ENCODE measurements at regions of chr11 and their contacts with region 1.

Region 1: DNA sequence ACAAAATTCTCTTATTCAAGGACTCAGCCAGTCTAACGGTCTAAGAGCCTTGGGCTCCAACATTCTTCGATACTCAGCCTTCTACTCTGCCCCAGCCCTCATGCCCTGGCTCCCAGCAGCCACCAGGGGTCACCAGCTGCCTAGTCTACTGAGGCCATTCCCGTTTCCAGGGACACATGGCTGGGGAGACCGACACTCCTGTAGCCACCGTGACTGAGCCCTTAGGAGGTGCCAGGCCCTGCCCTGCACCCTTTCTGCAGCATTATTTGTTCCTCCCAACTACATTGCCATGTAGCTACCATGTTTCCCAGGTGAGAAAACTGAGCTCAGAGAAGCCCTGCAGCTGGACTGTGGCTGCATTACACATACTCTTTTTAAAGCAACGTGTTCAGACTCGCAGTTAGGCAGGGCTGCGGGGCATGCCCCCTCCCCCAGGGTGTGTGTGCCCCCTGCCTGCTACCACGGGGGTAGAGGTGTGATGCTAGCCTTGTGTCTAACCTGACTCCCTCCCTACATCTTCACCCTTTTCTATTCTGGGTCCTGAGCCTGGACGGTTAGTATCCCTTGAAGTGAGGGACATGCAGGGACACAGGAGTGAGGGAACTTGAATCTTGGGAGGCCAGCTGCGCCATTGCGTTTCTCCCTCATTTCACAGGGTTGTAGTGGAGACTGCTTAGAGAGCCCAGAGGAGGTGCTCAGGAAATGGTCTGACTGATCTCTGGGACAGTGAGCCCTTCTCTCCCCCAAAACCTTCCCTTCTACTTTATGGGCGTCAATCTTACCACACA is 17.5 kb downstream of the ATG16L2 start:
- DNase-seq: peak; percentile 58 to 90
- H3K4me3 ChIP-seq: no peak overlapping the region
- H3K27ac ChIP-seq: no peak overlapping the region
- H3K4me1 ChIP-seq: peaks cover 0 to 5% (median 4%) of the 10 kb centered on the region in 4 experiments; a peak in 6 of 7 replicates
- H3K27me3 ChIP-seq: no peaks in the 10 kb centered on the region; a peak in 1 of 7 replicates
- CTCF ChIP-seq: peak; percentile 94 to 99 (median 96)
- EP300 ChIP-seq: no peak
- POLR2A ChIP-seq: no peak
- RAD21 ChIP-seq: peak; percentile 99

Region 2: GRCh38 chr11:72652873-72653630 is 178.7 kb before region 1 on chr11:
- CTCF ChIA-PET with region 1: no interaction called
- POLR2A ChIA-PET with region 1: no interaction called
- DNase-seq: peak; percentile 21 to 77
- H3K4me3 ChIP-seq: no peak overlapping the region
- H3K27ac ChIP-seq: no peak overlapping the region
- H3K4me1 ChIP-seq: peaks cover 0 to 12% (median 7%) of the 10 kb centered on the region in 4 experiments; a peak in 4 of 7 replicates
- H3K27me3 ChIP-seq: no peaks in the 10 kb centered on the region; a peak in 1 of 7 replicates
- CTCF ChIP-seq: no peak
- EP300 ChIP-seq: no peak
- POLR2A ChIP-seq: no peak
- RAD21 ChIP-seq: no peak

Region 3: DNA sequence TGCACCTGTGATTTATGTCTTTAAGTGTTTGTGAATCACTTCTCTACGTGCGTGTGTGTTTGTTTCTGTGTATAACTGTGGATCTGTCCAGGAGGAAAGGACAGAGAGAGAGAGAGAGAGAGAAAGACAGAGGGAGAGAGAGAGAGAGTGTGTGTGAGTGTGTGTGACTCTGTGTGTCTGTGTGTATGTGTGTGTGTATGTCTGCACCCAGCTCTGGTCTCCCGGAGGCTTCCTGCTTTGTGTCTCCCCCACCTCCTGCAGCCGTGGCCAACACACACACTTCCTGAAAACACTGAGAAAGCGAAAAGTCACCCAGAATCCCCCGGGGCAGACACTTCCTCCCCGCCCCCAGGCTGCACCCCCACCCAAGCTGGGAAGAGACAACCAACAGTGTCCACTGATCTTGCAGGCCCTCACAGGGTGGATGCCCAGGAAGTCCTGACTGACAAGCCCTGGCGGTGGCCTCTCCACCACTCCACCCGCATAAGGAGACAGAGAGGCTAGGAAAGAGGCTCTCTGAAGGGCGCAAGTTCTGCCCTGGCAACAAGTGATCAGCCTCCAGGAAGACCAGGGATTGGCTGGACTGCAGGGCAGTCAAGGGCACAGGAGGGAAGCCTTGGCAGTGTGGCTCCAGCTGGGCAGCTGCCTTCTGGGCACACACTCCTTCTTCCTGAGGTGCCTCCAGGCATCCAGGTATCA is 109.5 kb before region 1 on chr11:
- CTCF ChIA-PET with region 1: interaction called, 17 read pairs
- POLR2A ChIA-PET with region 1: no interaction called
- DNase-seq: peak in 1 of 2 experiments; percentile 86
- H3K4me3 ChIP-seq: no peak overlapping the region
- H3K27ac ChIP-seq: 0 out of 2 replicates have a peak overlapping the region, but pooled peaks have one; percentile 66
- H3K4me1 ChIP-seq: peaks cover 0 to 9% (median 5%) of the 10 kb centered on the region in 4 experiments; a peak in 3 of 7 replicates
- H3K27me3 ChIP-seq: no peaks in the 10 kb centered on the region
- CTCF ChIP-seq: no peak
- EP300 ChIP-seq: no peak
- POLR2A ChIP-seq: no peak
- RAD21 ChIP-seq: no peak

Region 4: GRCh38 chr11:72781313-72782050 is 50.2 kb before region 1 on chr11:
- CTCF ChIA-PET with region 1: no interaction called
- POLR2A ChIA-PET with region 1: no interaction called
- DNase-seq: peak in 1 of 2 experiments; percentile 63
- H3K4me3 ChIP-seq: peak overlapping the region; percentile 42 to 76 (median 57)
- H3K27ac ChIP-seq: no peak overlapping the region
- H3K4me1 ChIP-seq: peaks cover 5 to 19% (median 13%) of the 10 kb centered on the region in 4 experiments
- H3K27me3 ChIP-seq: peaks cover 0 to 12% (median 6%) of the 10 kb centered on the region in 4 experiments; a peak in 3 of 7 replicates
- CTCF ChIP-seq: no peak
- EP300 ChIP-seq: no peak
- POLR2A ChIP-seq: no peak
- RAD21 ChIP-seq: no peak

Region 5: DNA sequence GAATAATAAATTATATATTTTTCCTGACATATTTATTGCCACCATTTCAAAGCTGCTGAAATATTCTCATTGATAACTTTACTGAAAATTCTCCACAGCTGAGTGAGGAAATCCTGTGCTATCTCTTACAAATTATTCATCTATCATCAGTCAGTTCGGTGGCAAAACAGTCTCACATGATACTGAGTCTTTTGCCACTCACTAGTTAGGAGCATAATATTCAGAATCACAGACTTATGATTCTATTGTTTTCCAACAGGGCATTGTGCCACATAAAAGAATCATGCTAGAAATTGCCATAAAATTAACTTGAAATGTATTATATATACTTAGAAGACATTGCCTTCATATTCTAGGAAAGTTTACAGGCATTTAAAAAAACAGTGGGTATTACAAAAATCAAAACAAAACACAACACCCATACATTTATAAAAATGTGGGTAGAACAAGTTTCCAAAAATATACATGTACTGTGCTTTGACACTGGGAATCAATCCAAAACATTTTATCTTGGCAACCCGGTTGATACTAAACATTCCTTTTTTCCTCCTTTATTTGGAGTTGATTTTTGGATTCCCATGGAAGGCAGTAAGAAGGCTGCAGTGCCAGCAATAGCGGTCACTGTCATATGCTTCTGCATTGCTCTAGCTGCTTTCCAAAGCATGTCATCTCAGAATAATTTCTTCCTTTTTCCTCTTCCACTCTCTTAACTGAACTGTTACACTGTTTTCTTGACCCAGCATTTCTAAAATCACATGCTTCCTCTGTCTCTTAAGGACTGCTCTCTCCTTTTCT is 25.0 kb after region 1 on chr11:
- CTCF ChIA-PET with region 1: interaction called, 11 read pairs
- POLR2A ChIA-PET with region 1: no interaction called
- DNase-seq: no peak
- H3K4me3 ChIP-seq: no peak overlapping the region
- H3K27ac ChIP-seq: no peak overlapping the region
- H3K4me1 ChIP-seq: no peaks in the 10 kb centered on the region
- H3K27me3 ChIP-seq: no peaks in the 10 kb centered on the region
- CTCF ChIP-seq: no peak
- EP300 ChIP-seq: no peak
- POLR2A ChIP-seq: no peak
- RAD21 ChIP-seq: no peak

Region 6: GRCh38 chr11:73141848-73142286 is 310.2 kb after region 1 on chr11:
- CTCF ChIA-PET with region 1: interaction called, 19 read pairs
- POLR2A ChIA-PET with region 1: no interaction called
- DNase-seq: peak in 1 of 2 experiments; percentile 84
- H3K4me3 ChIP-seq: peak overlapping the region; percentile 69 to 80 (median 78)
- H3K27ac ChIP-seq: peak overlapping the region; percentile 90; the same call in 1 of the 2 replicates
- H3K4me1 ChIP-seq: peaks cover 2 to 10% (median 8%) of the 10 kb centered on the region in 4 experiments; a peak in 6 of 7 replicates
- H3K27me3 ChIP-seq: peaks cover 0 to 12% (median 6%) of the 10 kb centered on the region in 4 experiments; a peak in 3 of 7 replicates
- CTCF ChIP-seq: no peak
- EP300 ChIP-seq: no peak
- POLR2A ChIP-seq: no peak
- RAD21 ChIP-seq: no peak

Region 7: DNA sequence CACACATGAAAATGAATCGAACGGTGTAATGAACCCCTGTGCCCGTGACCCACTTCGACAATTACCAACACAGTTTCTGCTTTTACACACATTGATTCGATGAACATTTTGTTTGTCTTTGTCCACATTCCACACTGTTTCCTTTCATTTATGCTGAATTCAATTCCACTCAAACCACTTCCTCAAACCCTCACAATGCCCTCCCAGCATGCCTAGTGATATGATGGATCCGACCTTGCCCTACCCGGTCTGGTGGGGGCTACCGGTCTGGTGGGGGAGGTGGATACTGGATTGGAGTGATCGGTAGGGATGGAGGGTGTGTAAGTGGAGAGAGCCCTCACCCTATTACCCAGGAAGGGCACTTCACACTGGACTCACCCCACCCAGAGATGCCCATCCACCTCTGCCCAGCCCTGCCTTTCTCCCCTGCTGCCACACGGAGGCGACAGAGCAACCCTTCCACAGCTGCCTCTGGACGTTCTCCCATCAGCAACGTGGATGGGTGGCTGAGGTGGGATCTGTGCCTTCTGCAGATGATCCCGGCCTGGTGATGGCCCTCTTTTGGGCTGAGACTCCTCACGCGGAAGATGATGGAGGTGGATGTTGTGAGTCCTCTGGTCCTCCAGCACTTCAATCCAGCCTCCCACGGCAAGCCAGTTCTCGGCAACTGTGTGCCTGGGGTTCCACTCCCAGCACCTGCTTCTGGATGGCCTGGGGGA is 353.4 kb after region 1 on chr11:
- CTCF ChIA-PET with region 1: interaction called, 258 read pairs
- POLR2A ChIA-PET with region 1: no interaction called
- DNase-seq: peak in 1 of 2 experiments; percentile 84
- H3K4me3 ChIP-seq: no peak overlapping the region
- H3K27ac ChIP-seq: no peak overlapping the region
- H3K4me1 ChIP-seq: no peaks in the 10 kb centered on the region
- H3K27me3 ChIP-seq: no peaks in the 10 kb centered on the region
- CTCF ChIP-seq: peak; percentile 96 to 100 (median 96)
- EP300 ChIP-seq: no peak
- POLR2A ChIP-seq: no peak
- RAD21 ChIP-seq: peak; percentile 84 to 91

Region 8: DNA sequence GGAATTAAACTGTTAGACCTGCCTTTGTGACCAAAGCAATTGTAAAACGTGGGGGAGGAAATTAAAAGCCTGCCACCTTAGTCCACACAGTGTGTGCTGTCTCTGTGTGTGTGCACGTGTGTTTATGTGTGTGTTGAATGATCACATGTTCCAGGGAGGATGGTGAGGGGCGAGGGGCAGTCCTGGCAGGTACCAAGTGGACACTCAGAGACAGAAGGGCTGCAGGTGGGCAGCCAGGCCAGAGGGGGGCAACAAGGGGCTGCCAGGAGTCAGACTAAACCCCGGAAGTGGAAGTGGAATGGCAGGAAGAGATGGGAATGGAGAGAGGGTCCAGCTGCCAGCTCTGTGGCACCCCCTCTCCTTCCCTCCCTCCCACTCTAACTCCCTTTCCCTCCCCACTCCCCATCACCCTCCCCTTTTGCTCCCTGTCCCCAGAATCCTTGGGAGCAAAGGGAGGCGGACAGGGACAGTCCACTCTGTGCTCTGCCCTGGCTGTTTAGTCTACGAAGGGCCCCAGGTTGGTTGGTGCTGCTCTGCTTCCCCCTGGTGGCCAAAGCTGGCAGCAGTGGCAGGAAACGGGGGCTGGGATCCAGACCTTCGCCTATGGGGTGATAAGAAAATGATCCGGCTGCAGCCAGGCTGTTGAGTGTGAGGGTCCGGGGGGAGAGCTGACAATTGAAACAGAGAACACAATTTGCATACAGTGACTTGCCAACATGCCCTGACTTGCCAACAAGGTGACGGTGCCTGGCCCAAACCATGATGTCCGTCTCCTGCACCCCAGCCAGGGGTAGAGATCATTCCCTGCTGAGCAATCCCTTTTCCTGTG is 410.8 kb after region 1 on chr11:
- CTCF ChIA-PET with region 1: interaction called, 17 read pairs
- POLR2A ChIA-PET with region 1: interaction called, 3 read pairs
- DNase-seq: peak in 1 of 2 experiments; percentile 97
- H3K4me3 ChIP-seq: peak overlapping the region; percentile 14 to 58 (median 22); a peak in 5 of 8 replicates
- H3K27ac ChIP-seq: peak overlapping the region; percentile 13; the same call in 1 of the 2 replicates
- H3K4me1 ChIP-seq: peaks cover 0 to 8% (median 3%) of the 10 kb centered on the region in 4 experiments; a peak in 3 of 7 replicates
- H3K27me3 ChIP-seq: no peaks in the 10 kb centered on the region
- CTCF ChIP-seq: peak; percentile 92 to 96 (median 93)
- EP300 ChIP-seq: no peak
- POLR2A ChIP-seq: peak in 1 of 2 experiments; percentile 75; a peak in 1 of 3 replicates
- RAD21 ChIP-seq: peak; percentile 80 to 85